Natural killer cell (primary cell): ENCODE measurements at regions of chr17 and their contacts with region 1.

Region 1: DNA sequence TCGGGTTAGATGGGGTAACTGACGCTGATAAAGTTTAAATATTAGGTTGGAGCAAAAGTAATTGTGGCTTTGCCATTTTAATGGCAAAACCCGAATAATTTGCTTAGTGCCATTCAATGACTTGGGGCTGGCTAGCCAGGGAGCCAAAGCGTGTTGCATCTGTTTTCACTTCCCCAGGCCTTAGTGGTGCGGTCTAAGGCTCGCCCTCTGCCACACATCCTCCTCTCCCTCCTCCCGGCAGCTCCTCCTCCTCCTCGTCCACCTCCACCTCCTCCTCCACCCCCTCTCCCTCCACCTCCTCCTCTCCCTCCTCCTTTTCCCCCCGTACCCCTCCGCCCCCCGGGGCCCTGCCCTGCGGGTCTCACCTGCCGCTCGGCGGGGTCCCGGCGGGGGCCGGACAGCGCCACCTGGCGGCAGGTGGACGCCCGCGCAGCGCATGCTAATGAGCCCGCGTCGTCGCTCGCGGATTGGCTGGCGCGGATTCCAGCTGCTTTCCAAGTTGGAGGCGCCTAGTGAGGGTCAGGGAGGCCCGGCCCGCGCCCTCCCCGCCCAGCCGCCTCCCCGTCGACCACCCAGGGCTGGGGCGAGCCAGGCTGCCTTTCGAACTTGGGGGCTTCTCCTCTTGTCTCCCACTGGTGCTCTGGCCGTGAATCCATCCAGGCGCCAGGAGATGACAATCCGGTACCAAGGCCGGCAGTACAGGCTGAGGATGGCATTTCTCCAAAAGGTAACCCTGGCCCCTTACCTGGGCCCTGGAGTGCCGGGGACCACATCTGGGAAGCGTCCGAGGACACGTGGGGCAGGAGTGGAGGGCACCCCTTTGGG is 36.6 kb upstream of the RGS9 start:
- DNase-seq: peak; percentile 86 to 92
- ATAC-seq: peak; percentile 81 to 94 (median 87)
- H3K4me3 ChIP-seq: peak overlapping the region; percentile 41
- H3K4me3 Mint-ChIP-seq: peak overlapping the region; percentile 87
- H3K27ac ChIP-seq: peak overlapping the region; percentile 60
- H3K27ac Mint-ChIP-seq: peak overlapping the region; percentile 93
- H3K4me1 ChIP-seq: peaks cover 15% of the 10 kb centered on the region
- H3K4me1 Mint-ChIP-seq: peaks cover 19 to 22% of the 10 kb centered on the region in 2 donors
- H3K27me3 ChIP-seq: no peaks in the 10 kb centered on the region
- H3K27me3 Mint-ChIP-seq: no peaks in the 10 kb centered on the region
- CTCF ChIP-seq: peak; percentile 64

Region 2: GRCh38 chr17:64920026-64920418 is 180.5 kb before region 1 on chr17:
- intact Hi-C with region 1: loop called (anchors 2 kb)
- DNase-seq: no peak
- ATAC-seq: no peak
- H3K4me3 ChIP-seq: peak overlapping the region; percentile 76
- H3K4me3 Mint-ChIP-seq: peak overlapping the region; percentile 88
- H3K27ac ChIP-seq: peak overlapping the region; percentile 86
- H3K27ac Mint-ChIP-seq: peak overlapping the region; percentile 85 to 90
- H3K4me1 ChIP-seq: peaks cover 9% of the 10 kb centered on the region
- H3K4me1 Mint-ChIP-seq: no peaks in the 10 kb centered on the region
- H3K27me3 ChIP-seq: no peaks in the 10 kb centered on the region
- H3K27me3 Mint-ChIP-seq: no peaks in the 10 kb centered on the region
- CTCF ChIP-seq: no peak

Region 3: DNA sequence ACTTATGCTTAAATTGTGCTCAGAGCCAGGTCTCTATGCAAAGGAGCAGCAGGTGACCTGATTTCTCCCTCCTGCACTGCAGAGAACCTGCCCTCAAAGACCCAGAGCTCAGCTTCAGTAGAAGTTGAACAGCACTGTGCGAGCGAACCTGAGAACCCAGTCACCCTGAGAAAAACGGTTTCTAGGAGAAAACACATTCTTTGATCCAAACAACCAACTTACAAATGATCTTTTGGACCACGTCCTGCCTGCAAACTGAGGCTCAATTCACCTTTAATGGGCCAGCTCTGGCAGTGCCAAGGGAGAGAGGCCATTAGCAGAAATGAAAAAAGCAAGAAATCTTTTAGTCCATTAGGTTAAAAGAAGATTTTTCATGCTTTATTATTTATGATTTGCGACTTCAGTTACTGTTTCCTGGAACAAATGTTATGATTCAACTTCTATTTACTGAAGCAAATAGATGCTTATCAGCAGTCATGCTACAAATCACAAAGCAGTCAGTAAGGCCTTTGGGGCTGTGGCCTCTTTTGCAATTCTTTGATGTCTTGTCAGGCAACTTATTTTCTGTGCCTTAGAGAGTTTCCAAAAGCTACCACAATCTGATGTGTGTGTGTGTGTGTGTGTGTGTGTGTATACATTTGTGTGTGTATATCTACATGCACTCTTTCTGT is 115.5 kb before region 1 on chr17:
- intact Hi-C with region 1: loop called (anchors 5 kb)
- DNase-seq: peak; percentile 20 to 85
- ATAC-seq: peak in 1 of 3 donors; percentile 6
- H3K4me3 ChIP-seq: no peak overlapping the region
- H3K4me3 Mint-ChIP-seq: peak overlapping the region; percentile 82
- H3K27ac ChIP-seq: peak overlapping the region; percentile 94
- H3K27ac Mint-ChIP-seq: peak overlapping the region; percentile 99 to 100
- H3K4me1 ChIP-seq: peaks cover 42% of the 10 kb centered on the region
- H3K4me1 Mint-ChIP-seq: peaks cover 37 to 44% of the 10 kb centered on the region in 2 donors
- H3K27me3 ChIP-seq: no peaks in the 10 kb centered on the region
- H3K27me3 Mint-ChIP-seq: no peaks in the 10 kb centered on the region
- CTCF ChIP-seq: no peak

Region 4: DNA sequence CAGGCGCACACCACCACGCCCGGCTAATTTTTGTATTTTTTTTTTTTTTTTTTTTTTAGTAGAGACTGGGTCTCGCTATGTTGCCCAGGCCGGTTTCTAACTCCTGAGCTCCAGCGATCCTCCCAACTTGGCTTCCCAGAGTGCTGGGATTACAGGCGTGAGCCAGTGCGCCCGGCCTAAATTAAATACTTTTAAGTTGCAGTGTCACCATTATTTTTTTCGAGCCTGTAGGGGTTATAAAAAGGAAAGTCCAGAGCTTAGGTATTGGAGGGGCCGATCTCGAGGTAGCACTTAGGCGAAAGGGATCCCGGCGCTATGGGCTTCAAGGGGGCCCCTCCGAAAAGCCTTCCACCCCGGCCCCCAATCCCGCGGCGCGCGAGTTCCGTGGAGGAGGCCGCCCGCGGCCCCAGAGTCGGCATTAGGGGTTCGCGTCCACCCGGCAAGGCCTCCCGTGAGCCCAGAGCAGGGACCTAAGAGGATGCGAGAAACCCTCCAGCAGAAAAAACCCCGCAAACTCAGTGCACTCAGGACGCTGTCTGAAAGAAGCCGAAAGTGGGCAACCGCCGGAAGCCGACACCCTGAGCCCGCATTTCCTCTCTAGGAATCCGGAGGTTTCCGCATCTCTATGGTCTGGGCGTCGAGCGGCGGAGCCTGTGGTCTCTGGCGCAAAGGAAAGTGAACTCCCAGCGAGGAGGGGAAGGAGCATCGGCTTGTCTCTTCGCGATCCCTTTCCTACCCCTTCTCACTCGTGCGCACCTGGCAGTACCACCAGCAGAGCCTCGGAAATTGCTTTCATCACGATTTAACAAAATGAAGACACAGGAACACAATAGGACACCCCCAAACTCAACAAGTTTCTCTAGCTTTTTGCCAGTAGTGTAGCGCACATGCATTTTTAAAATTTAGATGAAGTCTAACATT is 22.6 kb after region 1 on chr17:
- intact Hi-C with region 1: loop called (anchors 1 kb)
- DNase-seq: peak; percentile 75 to 94
- ATAC-seq: peak; percentile 95 to 97 (median 96)
- H3K4me3 ChIP-seq: peak overlapping the region; percentile 64
- H3K4me3 Mint-ChIP-seq: peak overlapping the region; percentile 92
- H3K27ac ChIP-seq: peak overlapping the region; percentile 73
- H3K27ac Mint-ChIP-seq: peak overlapping the region; percentile 94 to 96
- H3K4me1 ChIP-seq: peaks cover 16% of the 10 kb centered on the region
- H3K4me1 Mint-ChIP-seq: peaks cover 15 to 23% of the 10 kb centered on the region in 2 donors
- H3K27me3 ChIP-seq: no peaks in the 10 kb centered on the region
- H3K27me3 Mint-ChIP-seq: no peaks in the 10 kb centered on the region
- CTCF ChIP-seq: no peak